AG04450 (cell line): ENCODE measurements at regions of chr11 and their contacts with region 1.

Region 1: DNA sequence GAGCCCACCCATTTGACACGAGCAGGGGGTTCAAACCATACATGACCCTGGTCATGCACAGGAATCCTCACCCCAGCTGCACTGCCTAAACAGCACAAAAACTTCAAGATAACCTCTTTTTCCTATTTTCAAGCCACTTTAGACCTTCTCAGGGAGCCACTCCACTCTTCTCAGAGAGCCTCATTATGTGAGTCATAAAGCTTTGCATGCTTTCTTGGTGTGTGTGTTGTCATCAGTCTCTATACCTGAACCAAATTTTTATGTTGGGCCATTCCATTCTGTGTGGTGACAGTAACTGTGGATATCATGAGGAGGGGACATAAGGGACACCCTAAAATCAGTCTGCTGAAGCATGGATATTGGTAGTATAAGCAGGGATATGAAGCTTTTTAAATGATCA is 769.5 kb upstream of the API5 start:
- DNase-seq: no peak
- H3K4me3 ChIP-seq: no peak overlapping the region
- H3K27ac ChIP-seq: no peak overlapping the region
- H3K27me3 ChIP-seq: no peaks in the 10 kb centered on the region
- CTCF ChIP-seq: no peak

Region 2: GRCh38 chr11:42593441-42593840 is 51.1 kb after region 1 on chr11:
- CTCF ChIA-PET with region 1: no interaction called
- POLR2A ChIA-PET with region 1: interaction called, 16 read pairs
- DNase-seq: no peak
- H3K4me3 ChIP-seq: no peak overlapping the region
- H3K27ac ChIP-seq: no peak overlapping the region
- H3K27me3 ChIP-seq: no peaks in the 10 kb centered on the region
- CTCF ChIP-seq: no peak